ENCODE measurements at regions of chr2 and their contacts with region 1.

Region 1: GRCh38 chr2:73939419-73939818 is 12.7 kb downstream of the DGUOK start:
- DNase-seq: no peak
- H3K4me3 ChIP-seq: no peak overlapping the region
- H3K27ac ChIP-seq: peak overlapping the region; percentile 39
- H3K27me3 ChIP-seq: no peaks in the 10 kb centered on the region
- CTCF ChIP-seq: peak; percentile 20; the same call in 1 of the 2 replicates

Region 2: GRCh38 chr2:73373344-73373743 is 566.1 kb before region 1 on chr2:
- CTCF ChIA-PET with region 1: no interaction called
- POLR2A ChIA-PET with region 1: no interaction called
- DNase-seq: no peak
- H3K4me3 ChIP-seq: no peak overlapping the region
- H3K27ac ChIP-seq: no peak overlapping the region
- H3K27me3 ChIP-seq: peaks cover 14% of the 10 kb centered on the region
- CTCF ChIP-seq: no peak

Region 3: DNA sequence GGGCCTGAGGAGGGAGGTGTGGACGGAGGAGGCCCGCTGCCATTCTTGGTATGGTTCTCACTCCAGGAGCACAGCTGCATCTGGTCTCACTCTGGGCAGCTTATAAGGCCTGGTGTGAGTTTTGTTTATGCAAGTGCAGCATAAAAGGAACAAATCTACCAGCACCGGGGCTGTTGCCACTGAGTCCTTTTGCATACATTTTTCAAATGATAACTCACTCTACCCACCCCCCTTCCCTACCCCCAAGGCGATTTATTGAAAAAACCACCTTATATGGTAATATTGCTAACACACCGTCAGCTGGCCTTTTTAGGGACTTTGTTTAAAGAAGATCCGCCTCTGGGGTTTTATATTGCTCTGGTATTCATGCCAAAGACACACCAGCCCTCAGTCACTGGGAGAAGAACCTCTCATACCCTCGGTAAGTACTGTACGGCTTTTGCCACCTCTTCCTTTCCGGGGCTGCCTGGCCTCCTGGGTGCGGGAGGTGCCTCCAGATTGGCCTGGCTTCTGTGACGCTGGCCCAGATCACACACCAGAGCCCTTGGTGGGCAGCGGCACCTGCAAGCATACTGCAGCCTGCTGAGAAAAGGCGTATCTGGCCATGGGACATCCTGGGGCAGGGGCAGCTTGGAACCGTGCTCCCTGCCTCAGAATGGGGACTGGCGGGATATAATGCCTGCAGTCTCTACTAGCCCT is 46.6 kb before region 1 on chr2 and contains the start of gene ACTG2:
- CTCF ChIA-PET with region 1: no interaction called
- POLR2A ChIA-PET with region 1: interaction called, 10 read pairs
- DNase-seq: peak; percentile 84
- H3K4me3 ChIP-seq: peak within 1 kb of the TSS; percentile 70
- H3K27ac ChIP-seq: peak within 1 kb of the TSS; percentile 92
- H3K27me3 ChIP-seq: no peaks in the 10 kb centered on the region
- CTCF ChIP-seq: no peak
- polyA plus RNA-seq, gene ACTG2: 641 and 956 TPM in 2 replicates

Region 4: DNA sequence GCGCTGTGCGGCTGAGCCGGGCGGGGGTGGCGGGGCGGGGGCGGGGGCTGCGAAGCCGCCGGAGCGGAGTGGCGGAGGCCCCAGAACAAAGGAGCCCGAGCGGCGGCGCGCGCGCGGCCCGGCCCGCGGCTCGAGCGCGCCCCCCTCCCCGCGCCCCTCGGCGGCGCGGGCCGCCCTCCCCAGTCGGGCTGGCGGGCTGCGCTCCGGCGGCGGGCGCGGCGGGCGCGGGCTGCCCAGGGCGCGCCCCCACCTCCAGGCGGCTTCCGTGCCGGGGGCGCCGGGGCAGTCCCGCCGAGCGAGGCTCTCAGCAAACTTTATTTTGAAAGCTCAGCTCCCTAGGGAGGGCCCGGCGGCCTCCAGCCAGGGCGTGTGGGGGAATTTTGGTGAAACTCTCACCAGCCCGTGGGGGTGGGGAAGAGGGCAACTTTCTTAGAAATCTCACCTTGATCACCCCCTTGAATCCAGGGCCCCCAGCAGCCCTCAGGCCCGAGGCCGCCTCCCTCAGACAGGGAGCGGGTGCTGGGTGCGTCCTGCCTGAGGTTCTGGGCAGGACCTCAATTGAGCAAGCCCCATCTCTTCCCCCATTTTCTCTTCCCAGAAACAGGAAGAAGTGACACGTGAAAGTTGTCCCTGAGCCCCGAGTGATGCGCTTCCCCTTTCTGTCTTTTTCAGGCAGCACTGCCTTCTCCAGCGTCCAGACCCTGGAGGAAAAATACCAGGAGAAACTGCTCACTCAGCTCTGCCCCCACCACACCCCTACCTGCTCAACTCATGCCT is 46.1 kb after region 1 on chr2:
- CTCF ChIA-PET with region 1: no interaction called
- POLR2A ChIA-PET with region 1: no interaction called
- DNase-seq: no peak
- H3K4me3 ChIP-seq: peak overlapping the region; percentile 66
- H3K27ac ChIP-seq: no peak overlapping the region
- H3K27me3 ChIP-seq: no peaks in the 10 kb centered on the region
- CTCF ChIP-seq: no peak

Measured in AG04450 (cell line).